Activated T-helper 2 cell treated with anti-CD3 and anti-CD28 coated beads, Interferon-gamma antibody, Interleukin-2, Interleukin-4, amounts not matched to agents 10 μg/mL and 5 μg/mL and 100 μg/mL, durations not matched to agents 14 hours and 24 hours and 36 hours (primary cell): ENCODE measurements at regions of chr12 and their contacts with region 1.

Region 1: DNA sequence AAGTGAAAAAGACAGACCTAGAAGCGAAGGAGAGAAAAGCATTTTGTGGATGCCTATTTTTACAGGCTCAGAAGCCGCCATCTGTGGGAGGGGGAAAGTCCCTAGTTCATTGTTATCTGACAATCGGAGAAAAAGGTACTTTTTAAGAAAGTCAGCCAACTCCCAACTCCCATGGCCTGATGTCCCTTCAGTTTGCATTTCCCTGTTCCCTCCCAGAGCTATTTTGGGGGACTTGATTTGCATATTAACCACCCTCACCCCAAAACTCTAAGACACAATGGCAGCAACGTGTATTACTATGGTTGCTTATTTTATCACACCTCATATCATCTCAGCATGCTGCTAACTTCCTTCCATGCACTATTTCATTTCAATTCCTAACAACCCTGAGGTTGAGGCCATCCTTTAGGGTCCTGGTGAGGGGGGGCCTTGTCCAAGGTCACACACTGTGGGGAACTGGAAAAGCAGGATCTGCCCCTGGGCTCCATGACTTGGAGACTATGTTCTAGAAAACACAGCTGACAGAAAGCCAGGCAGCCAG is 18.7 kb downstream of the HVCN1 start:
- DNase-seq: no peak
- H3K4me3 Mint-ChIP-seq: peak overlapping the region; percentile 32
- H3K27ac Mint-ChIP-seq: peak overlapping the region; percentile 82
- H3K4me1 Mint-ChIP-seq: peaks cover 43% of the 10 kb centered on the region
- H3K27me3 Mint-ChIP-seq: no peaks in the 10 kb centered on the region

Region 2: GRCh38 chr12:110689281-110690126 is 19.3 kb after region 1 on chr12:
- intact Hi-C with region 1: loop called (anchors 1 kb)
- DNase-seq: peak; percentile 66
- H3K4me3 Mint-ChIP-seq: peak overlapping the region; percentile 89
- H3K27ac Mint-ChIP-seq: peak overlapping the region; percentile 89
- H3K4me1 Mint-ChIP-seq: peaks cover 39% of the 10 kb centered on the region
- H3K27me3 Mint-ChIP-seq: peaks cover 6% of the 10 kb centered on the region